ENCODE measurements at regions of chrX and their contacts with region 1.

Region 1: GRCh38 chrX:5278908-5279307 is 949.8 kb downstream of the NLGN4X start:
- DNase-seq: peak; percentile 80
- H3K4me3 ChIP-seq: no peak overlapping the region
- H3K27ac ChIP-seq: peak overlapping the region; percentile 97
- H3K4me1 ChIP-seq: peaks cover 24% of the 10 kb centered on the region
- H3K27me3 ChIP-seq: no peaks in the 10 kb centered on the region
- CTCF ChIP-seq: no peak

Region 2: GRCh38 chrX:5113128-5113527 is 165.8 kb before region 1 on chrX:
- CTCF ChIA-PET with region 1: no interaction called
- POLR2A ChIA-PET with region 1: no interaction called
- intact Hi-C with region 1: loop called (anchors 10 kb)
- DNase-seq: peak; percentile 49
- H3K4me3 ChIP-seq: no peak overlapping the region
- H3K27ac ChIP-seq: no peak overlapping the region
- H3K4me1 ChIP-seq: peaks cover 9% of the 10 kb centered on the region
- H3K27me3 ChIP-seq: no peaks in the 10 kb centered on the region
- CTCF ChIP-seq: peak; percentile 60

Region 3: DNA sequence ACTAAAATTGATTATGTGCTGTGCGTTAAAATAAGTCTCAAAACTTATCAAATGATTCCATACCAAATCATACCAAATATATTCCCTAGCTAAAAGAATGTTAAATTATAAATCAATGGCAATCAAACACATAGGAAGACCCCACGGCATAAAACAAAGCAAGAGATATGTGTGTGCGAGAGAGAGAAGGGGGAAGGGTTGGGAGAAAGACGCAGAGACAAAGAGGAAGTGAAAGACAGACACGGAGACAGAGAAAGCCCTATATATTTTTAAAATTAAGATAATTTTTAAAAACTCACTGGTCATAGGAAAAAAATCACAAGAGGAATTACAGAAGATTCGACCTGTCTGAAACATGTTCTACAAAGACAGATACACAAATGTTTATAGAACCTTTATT is 578.3 kb after region 1 on chrX:
- CTCF ChIA-PET with region 1: no interaction called
- POLR2A ChIA-PET with region 1: no interaction called
- intact Hi-C with region 1: loop called (anchors 5 kb)
- DNase-seq: peak; percentile 64
- H3K4me3 ChIP-seq: peak overlapping the region; percentile 30
- H3K27ac ChIP-seq: peak overlapping the region; percentile 84
- H3K4me1 ChIP-seq: peaks cover 36% of the 10 kb centered on the region
- H3K27me3 ChIP-seq: no peaks in the 10 kb centered on the region
- CTCF ChIP-seq: no peak

Region 4: DNA sequence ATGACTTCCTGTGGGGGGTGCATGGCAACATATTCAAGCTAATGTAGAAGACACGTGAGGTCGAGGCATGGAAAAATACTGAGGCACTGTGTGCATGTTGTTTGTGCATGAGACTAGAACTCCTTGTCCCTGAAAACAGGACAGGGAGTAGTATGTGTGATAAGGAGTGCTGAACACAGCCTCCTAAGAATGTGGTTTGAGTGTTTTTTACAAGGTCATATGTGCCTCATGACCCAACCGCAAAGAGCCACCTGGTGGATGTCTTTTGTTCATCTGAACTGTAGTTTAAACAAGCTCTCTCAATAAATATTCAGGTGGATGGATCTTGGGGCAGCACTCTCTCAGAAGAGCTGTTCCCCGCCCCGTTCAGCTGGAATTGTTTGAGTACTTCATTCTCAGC is 723.1 kb after region 1 on chrX:
- CTCF ChIA-PET with region 1: no interaction called
- POLR2A ChIA-PET with region 1: no interaction called
- intact Hi-C with region 1: loop called (anchors 10 kb)
- DNase-seq: peak; percentile 37
- H3K4me3 ChIP-seq: no peak overlapping the region
- H3K27ac ChIP-seq: peak overlapping the region; percentile 85
- H3K4me1 ChIP-seq: peaks cover 70% of the 10 kb centered on the region
- H3K27me3 ChIP-seq: no peaks in the 10 kb centered on the region
- CTCF ChIP-seq: no peak

Region 5: GRCh38 chrX:6526564-6527136 is 1247.7 kb after region 1 on chrX:
- CTCF ChIA-PET with region 1: no interaction called
- POLR2A ChIA-PET with region 1: interaction called, 23 read pairs
- intact Hi-C with region 1: loop called (anchors 2 kb)
- DNase-seq: peak; percentile 74
- H3K4me3 ChIP-seq: no peak overlapping the region
- H3K27ac ChIP-seq: peak overlapping the region; percentile 81
- H3K4me1 ChIP-seq: no peaks in the 10 kb centered on the region
- H3K27me3 ChIP-seq: no peaks in the 10 kb centered on the region
- CTCF ChIP-seq: no peak